Naive thymus-derived CD8-positive, alpha-beta T cell (primary cell): ENCODE measurements at regions of chr9 and their contacts with region 1.

Region 1: DNA sequence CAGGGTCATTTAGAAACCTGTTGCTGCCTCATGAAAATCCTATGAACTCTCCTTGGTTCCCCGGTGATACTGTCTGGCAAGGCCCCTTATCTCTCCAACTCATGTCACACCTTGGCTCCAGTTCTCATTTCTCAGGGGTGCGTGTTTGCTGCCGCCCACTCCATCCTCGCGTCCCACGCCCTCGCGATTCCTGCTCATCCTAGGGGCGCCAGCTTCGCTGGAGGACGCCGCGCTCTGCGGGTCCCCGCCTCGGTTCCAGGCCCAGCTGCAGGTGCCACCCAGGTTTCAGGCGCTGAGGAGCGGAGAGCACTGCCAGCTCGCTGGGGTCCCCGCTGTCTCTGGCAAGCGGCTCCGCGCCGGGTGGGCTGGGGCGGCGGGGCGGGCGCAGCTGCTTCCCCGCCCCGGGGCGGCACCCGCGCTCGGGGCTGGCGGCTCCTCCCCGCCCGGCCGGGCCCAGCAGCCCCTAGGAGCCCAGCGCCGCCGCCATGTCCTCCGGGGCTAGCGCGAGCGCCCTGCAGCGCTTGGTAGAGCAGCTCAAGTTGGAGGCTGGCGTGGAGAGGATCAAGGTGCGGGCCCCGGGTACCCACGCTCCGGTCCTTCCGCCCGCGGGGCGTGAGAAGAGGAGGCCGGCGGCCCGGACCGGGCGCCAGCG is at the start of gene GNG10:
- DNase-seq: peak; percentile 60 to 79 (median 72)
- ATAC-seq: peak; percentile 92 to 93
- H3K4me3 Mint-ChIP-seq: peak within 1 kb of the TSS; percentile 88 to 98 (median 94)
- H3K27ac Mint-ChIP-seq: peak within 1 kb of the TSS; percentile 80 to 96 (median 92)
- H3K4me1 Mint-ChIP-seq: peaks cover 21 to 42% (median 33%) of the 10 kb centered on the region in 4 donors
- H3K27me3 Mint-ChIP-seq: no peaks in the 10 kb centered on the region
- polyA plus RNA-seq, gene GNG10: 20.9 to 26.4 (median 22.7) TPM

Region 2: GRCh38 chr9:111631071-111631971 is 30.0 kb before region 1 on chr9 and contains the start of gene DNAJC25:
- POLR2A ChIA-PET with region 1: interaction called, 17 read pairs
- DNase-seq: peak; percentile 89 to 98 (median 97)
- ATAC-seq: peak; percentile 91 to 96
- H3K4me3 Mint-ChIP-seq: peak within 1 kb of the TSS; percentile 92 to 100 (median 97)
- H3K27ac Mint-ChIP-seq: peak within 1 kb of the TSS; percentile 82 to 97 (median 92)
- H3K4me1 Mint-ChIP-seq: peaks cover 28 to 52% (median 45%) of the 10 kb centered on the region in 4 donors
- H3K27me3 Mint-ChIP-seq: no peaks in the 10 kb centered on the region
- polyA plus RNA-seq, gene DNAJC25: 1.1 to 2.4 (median 1.7) TPM

Region 3: DNA sequence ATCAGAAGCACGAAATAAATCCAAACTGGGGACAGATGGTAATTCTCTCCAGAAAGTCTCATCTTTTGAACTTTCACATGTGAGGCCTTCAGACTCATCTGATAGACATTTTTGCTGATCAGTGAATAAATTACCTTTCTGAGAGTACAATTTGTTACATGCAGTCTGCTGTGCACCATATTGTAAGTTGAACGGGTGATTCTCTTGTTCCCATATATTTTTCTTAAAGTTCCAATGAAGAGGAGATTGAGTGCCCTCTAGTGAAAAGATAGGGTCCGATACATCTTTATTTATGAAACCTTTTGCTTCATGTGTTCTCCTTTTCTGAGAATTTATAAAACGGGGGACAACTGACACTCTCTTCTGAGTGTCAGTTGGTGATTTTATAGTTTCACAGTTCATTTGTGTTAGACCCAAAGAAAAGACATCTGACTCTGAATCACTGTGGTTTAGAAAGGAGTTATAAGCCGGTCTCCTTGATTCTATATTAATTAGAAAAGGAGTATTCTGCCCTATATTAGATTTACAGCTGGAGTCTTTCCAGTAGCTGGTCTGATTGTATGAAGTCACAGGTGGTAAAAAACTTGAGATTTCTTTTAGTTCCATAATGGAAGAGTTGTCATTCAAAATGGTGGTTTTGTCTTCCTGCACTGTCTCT is 30.5 kb after region 1 on chr9:
- POLR2A ChIA-PET with region 1: no interaction called
- DNase-seq: peak in 3 of 10 donors; percentile 12 to 28 (median 18)
- ATAC-seq: no peak
- H3K4me3 Mint-ChIP-seq: no peak overlapping the region
- H3K27ac Mint-ChIP-seq: no peak overlapping the region
- H3K4me1 Mint-ChIP-seq: peaks cover 0 to 3% (median 0%) of the 10 kb centered on the region in 4 donors
- H3K27me3 Mint-ChIP-seq: no peaks in the 10 kb centered on the region